ENCODE measurements at regions of chr10 and their contacts with region 1.

Region 1: GRCh38 chr10:4849555-4850242 is 23.7 kb downstream of the AKR1E2 start:
- DNase-seq: peak; percentile 92
- ATAC-seq: peak; percentile 93
- H3K4me3 Mint-ChIP-seq: no peak overlapping the region
- H3K27ac Mint-ChIP-seq: 0 out of 2 replicates have a peak overlapping the region, but pooled peaks have one; percentile 47
- H3K4me1 Mint-ChIP-seq: peaks cover 12% of the 10 kb centered on the region
- H3K27me3 Mint-ChIP-seq: no peaks in the 10 kb centered on the region
- CTCF ChIP-seq: peak; percentile 90

Region 2: DNA sequence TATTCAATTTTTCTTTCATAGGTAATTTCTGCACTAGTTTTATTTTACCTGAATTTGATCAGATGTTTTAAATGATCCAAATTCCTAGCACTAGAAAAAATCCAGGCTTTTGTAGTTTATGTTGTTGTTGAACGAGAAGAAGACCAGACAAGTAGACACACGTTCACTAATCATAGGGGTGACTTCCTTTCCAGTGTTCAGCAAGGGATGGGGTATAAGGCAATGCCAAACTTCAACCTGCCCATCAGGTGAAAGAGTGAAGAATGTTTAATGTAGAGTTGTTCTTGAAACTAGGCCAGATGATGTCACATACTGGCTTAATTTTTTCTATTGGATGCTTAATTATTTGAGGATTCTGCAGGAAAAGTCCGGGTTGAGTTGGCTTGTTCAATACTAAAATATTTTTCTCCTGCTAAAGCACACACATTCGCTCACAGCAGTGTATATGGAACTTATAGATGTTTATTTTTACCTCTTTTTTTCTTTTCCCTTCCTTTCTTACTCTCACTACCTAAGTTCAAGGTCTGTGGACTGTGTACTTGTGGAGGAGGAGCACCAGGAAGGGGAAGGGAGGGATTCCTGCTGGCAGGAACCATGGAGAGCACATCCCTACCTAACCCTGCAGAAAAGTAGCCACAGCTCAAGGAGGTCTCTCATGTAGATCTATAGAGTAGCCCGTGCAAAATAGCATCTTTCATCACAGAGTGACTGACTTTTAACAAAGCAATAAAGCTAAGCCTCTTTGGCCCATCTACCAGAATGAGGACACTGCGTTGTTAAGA is 46.8 kb before region 1 on chr10:
- CTCF ChIA-PET with region 1: no interaction called
- POLR2A ChIA-PET with region 1: no interaction called
- DNase-seq: no peak
- ATAC-seq: no peak
- H3K4me3 Mint-ChIP-seq: no peak overlapping the region
- H3K27ac Mint-ChIP-seq: no peak overlapping the region
- H3K4me1 Mint-ChIP-seq: peaks cover 5% of the 10 kb centered on the region
- H3K27me3 Mint-ChIP-seq: no peaks in the 10 kb centered on the region; the same call in 1 of the 2 replicates
- CTCF ChIP-seq: no peak

Region 3: DNA sequence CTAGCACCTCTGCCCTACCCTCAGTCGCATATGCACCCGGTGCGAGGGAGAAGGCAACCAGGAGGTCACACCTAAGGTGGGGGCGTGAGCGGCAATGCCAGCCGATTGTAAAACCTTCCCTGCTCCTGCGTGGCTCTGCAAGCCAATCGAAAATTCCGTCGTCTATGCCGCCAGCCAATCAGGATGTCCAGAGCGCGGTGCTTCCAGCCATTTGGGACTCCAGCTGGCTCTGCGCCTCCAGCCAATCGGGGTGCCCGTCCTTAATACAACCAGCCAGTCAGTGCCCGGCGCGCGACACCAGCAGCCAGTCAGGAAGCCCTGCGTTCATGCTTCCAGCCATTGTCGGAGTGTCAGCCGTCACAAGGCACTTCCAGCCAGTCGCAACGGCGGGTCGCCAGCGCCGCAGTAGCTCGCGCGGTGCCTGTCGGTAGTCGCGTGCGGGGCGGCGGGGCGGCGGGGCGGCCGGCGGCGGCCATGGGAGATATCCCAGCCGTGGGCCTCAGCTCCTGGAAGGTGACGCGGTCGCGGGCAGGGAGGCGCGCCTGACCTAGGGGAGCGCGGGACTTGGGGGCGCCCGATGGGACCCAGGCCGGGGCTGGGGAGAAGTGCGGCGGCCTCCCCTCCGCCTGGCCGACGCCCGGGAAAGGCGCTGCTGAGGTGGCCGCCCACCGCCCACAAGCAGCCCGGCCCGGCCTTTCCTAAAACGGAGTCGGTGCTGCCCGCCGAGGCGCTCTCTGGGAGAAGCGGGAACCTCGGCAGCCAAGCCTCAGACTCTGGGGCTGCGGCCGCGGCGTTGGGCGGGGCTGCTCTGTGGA is 23.6 kb before region 1 on chr10 and contains the start of gene AKR1E2:
- CTCF ChIA-PET with region 1: interaction called, 12 read pairs
- POLR2A ChIA-PET with region 1: no interaction called
- DNase-seq: peak; percentile 82
- ATAC-seq: peak; percentile 93
- H3K4me3 Mint-ChIP-seq: peak within 1 kb of the TSS; percentile 65
- H3K27ac Mint-ChIP-seq: no peak within 1 kb of the TSS
- H3K4me1 Mint-ChIP-seq: peaks cover 9% of the 10 kb centered on the region
- H3K27me3 Mint-ChIP-seq: peaks cover 52% of the 10 kb centered on the region
- CTCF ChIP-seq: no peak
- total RNA-seq, gene AKR1E2: 1.7 to 5.6 TPM (median 5.4 TPM) in 3 replicates

Region 4: DNA sequence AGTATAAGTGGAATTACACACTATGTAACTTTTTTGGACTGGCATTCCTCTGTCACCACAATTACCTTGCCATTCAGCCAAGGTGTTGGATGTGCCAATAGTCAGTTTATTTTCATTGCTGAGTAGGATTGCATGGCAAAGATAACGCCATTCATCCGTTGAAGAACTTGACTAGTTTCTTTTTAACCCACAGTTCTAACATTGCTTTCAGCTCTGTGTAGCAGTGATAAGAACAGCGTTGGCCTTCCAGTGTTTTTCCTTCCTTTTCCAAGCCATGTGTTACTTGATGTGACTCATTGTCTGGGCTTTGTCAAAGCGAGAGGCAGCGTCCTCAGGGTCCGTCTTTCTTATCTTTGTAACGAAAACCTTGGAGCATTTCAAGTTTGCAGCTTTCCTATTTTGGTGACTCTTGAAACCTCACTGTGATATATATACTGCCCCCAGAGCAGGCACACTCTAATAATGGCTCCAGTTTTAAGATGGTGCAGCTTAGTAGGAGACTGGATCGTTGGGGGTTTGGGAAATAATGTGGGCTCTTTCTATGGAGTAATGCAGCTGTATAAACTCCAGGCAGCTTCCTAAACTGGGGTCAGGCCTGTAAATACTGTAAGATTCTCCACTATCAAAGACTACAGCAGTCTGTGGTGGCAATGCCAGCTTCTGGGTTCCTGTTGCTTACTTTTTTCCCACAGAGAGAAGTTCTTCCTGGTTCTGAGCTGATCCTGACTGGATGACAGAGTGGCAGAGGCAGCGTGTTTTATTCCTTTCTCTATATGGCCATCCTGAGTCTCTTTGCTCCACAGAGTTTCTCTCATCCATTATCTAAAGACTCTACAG is 18.0 kb after region 1 on chr10:
- CTCF ChIA-PET with region 1: interaction called, 12 read pairs
- POLR2A ChIA-PET with region 1: no interaction called
- DNase-seq: no peak
- ATAC-seq: no peak
- H3K4me3 Mint-ChIP-seq: no peak overlapping the region
- H3K27ac Mint-ChIP-seq: no peak overlapping the region
- H3K4me1 Mint-ChIP-seq: peaks cover 31% of the 10 kb centered on the region
- H3K27me3 Mint-ChIP-seq: no peaks in the 10 kb centered on the region
- CTCF ChIP-seq: no peak

Region 5: GRCh38 chr10:4918236-4918635 is 68.5 kb after region 1 on chr10:
- CTCF ChIA-PET with region 1: no interaction called
- POLR2A ChIA-PET with region 1: no interaction called
- DNase-seq: no peak
- ATAC-seq: no peak
- H3K4me3 Mint-ChIP-seq: no peak overlapping the region
- H3K27ac Mint-ChIP-seq: no peak overlapping the region
- H3K4me1 Mint-ChIP-seq: no peaks in the 10 kb centered on the region
- H3K27me3 Mint-ChIP-seq: no peaks in the 10 kb centered on the region
- CTCF ChIP-seq: no peak

Region 6: DNA sequence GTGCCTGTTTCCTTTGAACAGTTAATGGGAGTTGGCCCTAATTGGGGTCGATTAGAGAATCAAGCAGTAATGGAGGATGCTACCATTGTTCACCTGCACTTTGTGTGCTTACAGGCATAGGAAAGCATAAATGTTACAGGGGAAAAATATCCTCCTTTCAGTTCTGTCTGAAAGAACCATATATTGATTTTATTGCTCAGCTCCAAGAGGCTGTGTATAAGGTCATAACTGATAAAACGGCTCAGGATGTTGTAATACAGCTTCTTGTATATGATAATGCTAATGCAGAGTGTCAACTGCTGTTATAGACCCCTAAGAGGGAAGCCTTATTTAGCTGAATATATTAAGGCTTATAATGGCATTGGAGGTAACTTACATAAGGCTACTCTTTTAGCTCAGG is 186.8 kb after region 1 on chr10:
- CTCF ChIA-PET with region 1: interaction called, 12 read pairs
- POLR2A ChIA-PET with region 1: no interaction called
- DNase-seq: no peak
- ATAC-seq: no peak
- H3K4me3 Mint-ChIP-seq: no peak overlapping the region
- H3K27ac Mint-ChIP-seq: no peak overlapping the region
- H3K4me1 Mint-ChIP-seq: peaks cover 34% of the 10 kb centered on the region
- H3K27me3 Mint-ChIP-seq: no peaks in the 10 kb centered on the region
- CTCF ChIP-seq: no peak

Region 7: GRCh38 chr10:5283305-5284158 is 433.8 kb after region 1 on chr10:
- CTCF ChIA-PET with region 1: interaction called, 10 read pairs
- POLR2A ChIA-PET with region 1: no interaction called
- DNase-seq: peak; percentile 66
- ATAC-seq: peak; percentile 89
- H3K4me3 Mint-ChIP-seq: no peak overlapping the region
- H3K27ac Mint-ChIP-seq: no peak overlapping the region
- H3K4me1 Mint-ChIP-seq: peaks cover 26% of the 10 kb centered on the region
- H3K27me3 Mint-ChIP-seq: no peaks in the 10 kb centered on the region
- CTCF ChIP-seq: peak; percentile 53